Activated T-helper 2 cell treated with anti-CD3 and anti-CD28 coated beads, Interferon-gamma antibody, Interleukin-2, Interleukin-4, amounts not matched to agents 10 μg/mL and 5 μg/mL and 100 μg/mL, durations not matched to agents 14 hours and 24 hours and 36 hours (primary cell): ENCODE measurements at regions of chr1 and their contacts with region 1.

Region 1: GRCh38 chr1:21782868-21783678 is at the start of gene USP48:
- DNase-seq: peak; percentile 98
- H3K4me3 Mint-ChIP-seq: peak within 1 kb of the TSS; percentile 96
- H3K27ac Mint-ChIP-seq: peak within 1 kb of the TSS; percentile 100
- H3K4me1 Mint-ChIP-seq: peaks cover 19% of the 10 kb centered on the region
- H3K27me3 Mint-ChIP-seq: peaks cover 4% of the 10 kb centered on the region
- total RNA-seq, gene USP48: 101 TPM in 2 replicates

Region 2: GRCh38 chr1:21594935-21595897 is 187.9 kb before region 1 on chr1:
- intact Hi-C with region 1: no loop called
- DNase-seq: peak; percentile 34
- H3K4me3 Mint-ChIP-seq: no peak overlapping the region
- H3K27ac Mint-ChIP-seq: no peak overlapping the region
- H3K4me1 Mint-ChIP-seq: no peaks in the 10 kb centered on the region
- H3K27me3 Mint-ChIP-seq: peaks cover 4% of the 10 kb centered on the region

Region 3: DNA sequence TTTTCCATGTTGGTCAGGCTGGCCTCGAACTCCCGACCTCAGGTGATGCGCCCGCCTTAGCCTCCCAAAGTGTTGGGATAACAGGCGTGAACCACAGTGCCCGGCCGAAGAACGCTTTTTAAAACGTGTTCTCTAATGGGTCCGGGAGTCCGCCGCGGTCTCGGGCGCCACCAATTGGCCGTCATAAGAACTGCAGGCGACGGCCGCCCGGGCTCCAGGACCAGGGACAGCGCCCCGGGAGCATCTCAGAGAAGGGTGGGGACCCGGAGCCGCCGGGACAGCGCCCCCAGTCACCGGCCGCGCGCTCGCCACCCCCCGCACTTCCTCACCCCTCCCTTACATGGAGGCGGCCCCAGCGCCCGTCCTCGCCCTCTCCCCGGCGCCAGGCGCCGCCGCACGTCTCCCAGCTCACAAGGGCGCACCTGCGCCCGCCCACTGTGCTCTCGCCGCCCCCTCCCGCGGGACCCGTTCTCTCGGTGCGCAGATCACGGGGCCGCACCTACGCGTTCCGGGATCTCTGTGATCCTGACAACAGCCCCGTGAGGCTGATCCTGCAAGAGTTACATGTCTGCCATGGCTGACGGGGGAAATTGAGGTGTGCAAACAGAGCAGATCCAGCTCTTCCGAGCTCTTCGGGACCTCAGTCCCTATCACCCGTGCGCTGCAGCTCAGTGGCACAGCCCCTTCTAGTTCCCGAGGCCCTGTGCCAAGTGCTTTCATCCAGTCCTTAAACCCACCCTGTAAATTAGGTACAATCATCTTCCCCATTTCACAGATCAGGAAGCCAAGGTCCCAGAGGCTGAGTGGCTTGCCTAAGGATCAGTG is 123.8 kb before region 1 on chr1:
- intact Hi-C with region 1: loop called (anchors 2 kb)
- DNase-seq: peak; percentile 80
- H3K4me3 Mint-ChIP-seq: peak overlapping the region; percentile 56
- H3K27ac Mint-ChIP-seq: no peak overlapping the region
- H3K4me1 Mint-ChIP-seq: peaks cover 6% of the 10 kb centered on the region
- H3K27me3 Mint-ChIP-seq: peaks cover 29% of the 10 kb centered on the region

Region 4: GRCh38 chr1:21742578-21742977 is 40.5 kb before region 1 on chr1:
- intact Hi-C with region 1: loop called (anchors 2 kb)
- DNase-seq: no peak
- H3K4me3 Mint-ChIP-seq: no peak overlapping the region
- H3K27ac Mint-ChIP-seq: no peak overlapping the region
- H3K4me1 Mint-ChIP-seq: peaks cover 16% of the 10 kb centered on the region
- H3K27me3 Mint-ChIP-seq: no peaks in the 10 kb centered on the region

Region 5: GRCh38 chr1:21764615-21765423 is 18.3 kb before region 1 on chr1:
- intact Hi-C with region 1: loop called (anchors 1 kb)
- DNase-seq: no peak
- H3K4me3 Mint-ChIP-seq: no peak overlapping the region
- H3K27ac Mint-ChIP-seq: no peak overlapping the region
- H3K4me1 Mint-ChIP-seq: peaks cover 44% of the 10 kb centered on the region
- H3K27me3 Mint-ChIP-seq: no peaks in the 10 kb centered on the region

Region 6: GRCh38 chr1:21801100-21801499 is 18.0 kb after region 1 on chr1:
- intact Hi-C with region 1: no loop called
- DNase-seq: no peak
- H3K4me3 Mint-ChIP-seq: no peak overlapping the region
- H3K27ac Mint-ChIP-seq: no peak overlapping the region
- H3K4me1 Mint-ChIP-seq: no peaks in the 10 kb centered on the region
- H3K27me3 Mint-ChIP-seq: peaks cover 1% of the 10 kb centered on the region

Region 7: DNA sequence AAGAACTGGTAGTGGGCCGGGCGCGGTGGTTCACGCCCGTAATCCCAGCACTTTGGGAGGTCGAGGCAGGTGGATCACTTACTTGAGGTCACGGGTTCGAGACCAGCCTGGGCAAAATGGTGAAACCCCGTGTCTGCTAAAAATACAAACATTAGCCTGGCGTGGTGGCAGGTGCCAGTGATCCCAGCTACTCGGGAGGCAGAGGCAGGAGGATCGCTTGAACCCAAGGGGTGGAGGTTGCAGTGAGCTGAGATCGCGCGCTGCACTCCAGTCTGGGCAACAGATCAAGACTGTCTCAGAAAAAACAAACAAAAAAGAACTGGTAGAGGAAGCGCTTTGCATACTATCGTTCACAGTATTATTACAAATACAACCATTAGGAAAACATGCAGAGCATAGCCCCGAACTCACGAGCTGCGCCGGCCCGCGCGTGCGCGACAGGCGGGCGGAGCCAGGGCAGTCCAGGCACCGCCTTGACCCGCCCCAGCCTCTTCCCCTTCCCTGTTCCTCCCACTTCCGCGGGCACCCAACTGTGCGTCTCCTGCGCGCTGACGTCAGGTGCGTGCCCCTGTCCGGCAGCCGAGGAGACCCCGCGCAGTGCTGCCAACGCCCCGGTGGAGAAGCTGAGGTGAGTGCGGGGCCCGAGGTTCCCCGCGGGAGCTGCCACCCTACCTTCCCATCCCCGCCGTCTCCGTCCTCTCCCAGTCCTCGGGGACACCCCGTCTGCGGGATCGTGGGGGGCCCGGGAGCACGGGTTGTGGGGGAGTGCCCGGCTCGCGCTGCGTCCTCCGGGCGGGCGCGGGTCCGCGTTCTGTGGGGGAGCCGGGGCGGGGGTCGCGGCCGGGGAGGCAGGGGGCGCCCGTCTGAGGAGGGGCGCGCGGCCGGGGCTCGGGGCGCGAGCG is 269.3 kb after region 1 on chr1 and contains the start of gene CDC42:
- intact Hi-C with region 1: loop called (anchors 5 kb)
- DNase-seq: peak; percentile 96
- H3K4me3 Mint-ChIP-seq: peak within 1 kb of the TSS; percentile 98
- H3K27ac Mint-ChIP-seq: peak within 1 kb of the TSS; percentile 99
- H3K4me1 Mint-ChIP-seq: peaks cover 52% of the 10 kb centered on the region
- H3K27me3 Mint-ChIP-seq: no peaks in the 10 kb centered on the region
- total RNA-seq, gene CDC42: 342 and 350 TPM in 2 replicates